ENCODE measurements at regions of chr12 and their contacts with region 1.

Region 1: DNA sequence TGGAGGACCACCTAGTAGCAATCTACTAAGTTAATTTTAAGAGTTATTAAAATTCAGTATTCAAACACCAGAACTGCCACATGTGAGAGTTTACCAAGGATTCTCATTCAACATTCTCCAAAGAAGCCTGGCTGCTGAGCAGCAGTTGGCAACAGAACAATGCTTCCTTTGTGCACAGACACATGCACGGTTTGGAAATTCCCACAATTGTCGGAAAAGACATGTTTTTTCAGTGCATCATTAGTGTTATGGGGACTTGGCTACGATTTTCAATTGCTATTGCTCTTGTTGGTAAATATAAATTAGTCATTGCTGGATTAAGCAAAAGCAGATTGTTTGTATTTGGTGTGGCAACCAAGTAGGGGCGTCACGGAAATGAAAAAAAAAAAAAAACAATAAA is 22.2 kb downstream of the ST8SIA1 start:
- DNase-seq: no peak
- ATAC-seq: peak in 1 of 2 donors; percentile 36
- H3K4me3 ChIP-seq: no peak overlapping the region
- H3K27ac ChIP-seq: no peak overlapping the region
- H3K4me1 ChIP-seq: no peaks in the 10 kb centered on the region
- H3K27me3 ChIP-seq: no peaks in the 10 kb centered on the region
- CTCF ChIP-seq: no peak
- POLR2A ChIP-seq: no peak

Region 2: DNA sequence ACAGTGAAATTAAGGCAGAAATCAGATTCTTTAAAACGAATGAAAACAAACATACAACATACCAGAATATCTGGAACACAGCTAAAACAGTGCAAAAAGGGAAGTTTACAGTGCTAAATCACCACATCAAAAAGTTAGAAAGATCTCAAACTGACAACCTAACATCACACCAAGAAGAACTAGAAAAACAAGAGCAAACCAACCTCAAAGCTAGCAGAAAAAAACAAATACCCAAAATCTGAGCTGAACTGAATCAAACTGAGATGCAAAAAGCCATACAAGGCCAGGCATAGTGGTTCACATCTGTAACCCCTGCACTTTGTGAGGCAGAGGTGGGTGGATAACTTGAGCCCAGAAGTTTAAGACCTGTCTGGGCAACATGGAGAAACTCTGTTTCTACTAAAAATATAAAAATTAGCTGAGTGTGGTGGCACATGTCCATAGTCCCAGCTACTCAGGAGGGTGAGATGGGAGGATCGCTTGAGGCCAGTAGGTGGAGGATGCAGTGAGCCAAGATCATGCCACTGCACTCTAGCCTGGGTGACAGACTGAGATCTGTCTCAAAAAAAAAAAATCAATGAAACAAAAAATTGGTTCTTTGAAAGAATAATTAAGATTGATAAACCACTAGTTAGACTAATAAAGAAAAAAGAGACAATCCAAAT is 621.5 kb before region 1 on chr12:
- in situ Hi-C with region 1: no loop called
- intact Hi-C with region 1: no loop called
- DNase-seq: no peak
- ATAC-seq: no peak
- H3K4me3 ChIP-seq: no peak overlapping the region
- H3K27ac ChIP-seq: no peak overlapping the region
- H3K4me1 ChIP-seq: no peaks in the 10 kb centered on the region
- H3K27me3 ChIP-seq: no peaks in the 10 kb centered on the region
- CTCF ChIP-seq: no peak
- POLR2A ChIP-seq: no peak

Region 3: GRCh38 chr12:22271023-22271422 is 41.3 kb before region 1 on chr12:
- in situ Hi-C with region 1: no loop called
- intact Hi-C with region 1: loop called (anchors 5 kb)
- DNase-seq: no peak
- ATAC-seq: no peak
- H3K4me3 ChIP-seq: no peak overlapping the region
- H3K27ac ChIP-seq: no peak overlapping the region
- H3K4me1 ChIP-seq: no peaks in the 10 kb centered on the region
- H3K27me3 ChIP-seq: no peaks in the 10 kb centered on the region
- CTCF ChIP-seq: no peak
- POLR2A ChIP-seq: no peak

Measured in gastrocnemius medialis (tissue), 4 donors.